Activated naive CD4-positive, alpha-beta T cell treated with anti-CD3 and anti-CD28 coated beads for 36 hours (primary cell): ENCODE measurements at regions of chr12 and their contacts with region 1.

Region 1: DNA sequence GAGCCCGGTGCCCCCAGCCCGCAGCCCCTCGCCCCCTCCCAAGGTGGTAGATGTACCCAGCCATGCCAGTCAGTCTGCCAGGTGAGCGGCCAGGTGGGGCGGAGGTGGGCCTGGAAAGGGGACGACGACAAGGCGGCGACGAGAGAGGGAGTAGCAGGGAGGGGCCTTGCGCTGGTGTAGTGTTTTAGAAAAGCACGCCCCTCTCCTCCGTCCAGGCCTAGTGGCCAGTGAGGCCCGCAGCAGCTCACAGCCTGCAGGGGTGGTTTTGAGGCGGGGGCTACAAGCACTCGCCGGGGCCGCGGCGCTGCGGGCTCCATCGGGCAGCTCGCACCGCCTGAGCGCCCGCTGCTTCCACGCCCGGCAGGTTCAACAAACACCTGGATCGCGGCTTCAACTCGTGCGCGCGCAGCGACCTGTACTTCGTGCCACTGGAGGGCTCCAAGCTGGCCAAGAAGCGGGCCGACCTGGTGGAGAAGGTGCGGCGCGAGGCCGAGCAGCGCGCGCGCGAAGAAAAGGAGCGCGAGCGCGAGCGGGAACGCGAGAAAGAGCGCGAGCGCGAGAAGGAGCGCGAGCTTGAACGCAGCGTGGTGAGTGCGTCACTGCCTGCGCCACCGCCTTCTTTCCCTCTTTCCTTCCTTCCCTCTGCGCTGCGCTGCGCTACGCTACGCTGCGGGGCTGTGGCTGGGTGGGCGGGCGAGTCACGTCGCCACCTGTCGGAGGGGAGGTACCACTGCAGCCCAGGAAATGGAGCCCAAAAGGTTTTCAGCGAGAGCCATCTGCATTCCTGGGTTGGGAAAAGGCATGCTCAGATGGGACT is 5.9 kb upstream of the RNU7-1 start:
- DNase-seq: peak; percentile 96
- H3K4me3 Mint-ChIP-seq: peak overlapping the region; percentile 92
- H3K27ac Mint-ChIP-seq: peak overlapping the region; percentile 96
- H3K4me1 Mint-ChIP-seq: peaks cover 47% of the 10 kb centered on the region
- H3K27me3 Mint-ChIP-seq: no peaks in the 10 kb centered on the region

Region 2: DNA sequence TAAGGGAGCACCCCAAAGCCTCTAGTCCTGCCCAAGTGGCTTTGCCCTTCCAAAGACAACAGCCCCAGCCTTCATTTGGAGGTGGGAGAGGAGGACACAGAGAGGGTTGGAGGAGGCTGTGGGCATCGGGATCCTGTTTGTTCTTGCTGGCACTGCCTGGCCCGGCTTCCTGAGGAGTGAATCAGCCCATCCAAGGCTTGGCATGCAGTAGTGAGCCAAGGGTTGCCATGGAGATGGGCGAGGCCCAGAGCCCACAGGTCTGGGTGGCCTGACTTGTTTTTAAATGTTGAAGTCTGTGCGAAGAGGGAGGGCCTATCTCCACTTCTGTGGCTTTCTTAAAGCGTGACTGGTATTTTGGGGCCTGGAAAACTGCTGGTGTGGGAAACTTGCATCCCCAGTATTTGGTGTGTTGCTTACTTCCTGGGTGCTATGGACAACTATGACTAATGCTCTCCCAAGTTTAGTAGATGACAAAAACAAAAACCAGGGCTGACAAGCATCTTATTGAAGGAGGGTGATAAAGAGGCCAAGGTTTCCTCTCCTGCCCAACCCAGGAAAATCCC is 721.7 kb before region 1 on chr12:
- CTCF ChIA-PET with region 1: no interaction called
- intact Hi-C with region 1: no loop called
- DNase-seq: no peak
- H3K4me3 Mint-ChIP-seq: no peak overlapping the region
- H3K27ac Mint-ChIP-seq: no peak overlapping the region
- H3K4me1 Mint-ChIP-seq: peaks cover 7% of the 10 kb centered on the region
- H3K27me3 Mint-ChIP-seq: no peaks in the 10 kb centered on the region

Region 3: DNA sequence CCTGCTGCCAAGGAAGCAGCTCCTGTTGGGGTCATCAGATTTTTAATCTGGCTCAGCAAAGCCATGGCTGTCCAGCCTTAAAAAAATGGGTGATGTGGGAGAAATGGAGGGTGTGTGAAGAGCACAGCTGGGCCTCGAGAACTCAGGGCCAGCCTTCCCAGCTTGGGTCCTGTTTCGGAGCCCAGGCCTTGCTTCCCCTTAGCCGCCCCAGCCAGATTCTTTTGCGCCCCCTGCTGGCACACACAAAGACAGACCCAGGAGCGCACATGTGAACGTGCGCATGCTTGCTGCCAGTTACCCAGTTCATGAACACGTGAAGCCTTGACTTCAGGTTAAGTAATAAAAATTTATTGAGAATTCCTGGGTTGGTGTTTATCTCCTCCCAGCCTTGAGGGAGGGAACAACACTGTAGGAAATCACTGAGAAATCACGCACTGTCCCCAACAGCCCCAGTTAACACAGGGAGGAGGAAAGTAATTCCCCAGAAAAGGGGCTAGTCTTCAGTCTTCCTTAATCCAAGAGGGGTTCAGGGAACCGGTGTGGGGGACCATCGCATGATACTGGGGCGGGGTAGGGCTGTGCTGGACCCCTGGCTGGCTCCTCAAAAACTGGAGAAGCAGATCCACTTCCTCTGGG is 27.5 kb after region 1 on chr12:
- CTCF ChIA-PET with region 1: interaction called, 397 read pairs
- intact Hi-C with region 1: loop called (anchors 1 kb)
- DNase-seq: peak; percentile 95
- H3K4me3 Mint-ChIP-seq: no peak overlapping the region
- H3K27ac Mint-ChIP-seq: peak overlapping the region; percentile 93
- H3K4me1 Mint-ChIP-seq: peaks cover 81% of the 10 kb centered on the region
- H3K27me3 Mint-ChIP-seq: no peaks in the 10 kb centered on the region

Region 4: GRCh38 chr12:7241404-7242005 is 303.8 kb after region 1 on chr12:
- CTCF ChIA-PET with region 1: no interaction called
- intact Hi-C with region 1: no loop called
- DNase-seq: no peak
- H3K4me3 Mint-ChIP-seq: no peak overlapping the region
- H3K27ac Mint-ChIP-seq: no peak overlapping the region
- H3K4me1 Mint-ChIP-seq: no peaks in the 10 kb centered on the region
- H3K27me3 Mint-ChIP-seq: peaks cover 16% of the 10 kb centered on the region